ENCODE measurements at regions of chr4 and their contacts with region 1.

Region 1: DNA sequence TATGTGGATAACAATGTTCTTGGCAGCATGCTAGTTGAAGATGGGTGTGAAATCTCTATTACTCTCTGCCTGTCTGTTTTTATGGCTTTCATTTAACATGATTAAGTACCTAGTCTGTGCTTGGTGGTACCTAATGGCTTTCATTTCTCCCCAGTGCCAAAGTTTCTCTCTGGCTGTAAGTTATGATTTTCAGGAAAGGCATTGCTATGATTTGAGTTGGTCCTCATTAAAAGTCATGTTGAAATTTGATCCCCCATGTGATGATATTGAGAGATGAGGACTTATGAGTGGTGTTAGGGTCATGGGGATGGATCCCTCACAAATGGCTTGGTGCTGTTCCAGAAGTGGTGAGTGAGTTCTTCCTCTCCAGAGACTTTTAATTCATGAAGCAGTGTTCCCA is 162.4 kb upstream of the IL15 start:
- DNase-seq: no peak
- H3K4me3 ChIP-seq: no peak overlapping the region
- H3K27ac ChIP-seq: no peak overlapping the region
- H3K4me1 ChIP-seq: no peaks in the 10 kb centered on the region
- H3K27me3 ChIP-seq: no peaks in the 10 kb centered on the region
- CTCF ChIP-seq: no peak
- POLR2A ChIP-seq: no peak

Region 2: DNA sequence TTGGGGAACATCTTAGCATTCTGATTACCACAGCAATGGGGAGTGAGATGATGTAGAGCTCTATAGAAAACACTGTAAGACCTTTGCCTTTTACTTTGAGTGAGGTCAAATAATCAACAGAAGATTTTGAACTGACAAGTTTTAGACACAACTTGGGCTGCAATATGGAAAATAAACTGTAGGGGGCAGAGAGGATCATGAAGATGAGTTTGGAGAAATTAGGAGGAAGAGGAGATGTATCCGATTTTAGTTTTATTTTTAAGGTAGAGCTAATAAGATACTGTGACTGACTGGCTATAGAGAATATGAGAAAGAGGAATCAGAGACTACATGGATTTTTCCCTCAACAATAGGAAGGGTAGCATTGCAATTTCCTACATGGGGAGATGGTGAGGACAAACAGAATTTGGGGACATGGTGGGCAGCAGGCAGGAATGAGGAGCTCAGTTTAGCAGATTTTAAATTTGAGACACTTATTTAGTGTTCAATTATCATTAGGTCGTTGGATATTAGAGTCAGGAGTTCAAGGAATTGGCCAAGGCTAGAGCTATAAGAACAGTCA is 809.0 kb after region 1 on chr4:
- intact Hi-C with region 1: loop called (anchors 5 kb)
- DNase-seq: no peak
- H3K4me3 ChIP-seq: no peak overlapping the region
- H3K27ac ChIP-seq: no peak overlapping the region
- H3K4me1 ChIP-seq: no peaks in the 10 kb centered on the region
- H3K27me3 ChIP-seq: no peaks in the 10 kb centered on the region
- CTCF ChIP-seq: peak in 1 of 3 donors; percentile 25
- POLR2A ChIP-seq: no peak